CD4-positive, alpha-beta memory T cell (primary cell): ENCODE measurements at regions of chrX and their contacts with region 1.

Region 1: GRCh38 chrX:136147315-136147901 is at the start of gene FHL1:
- DNase-seq: peak; percentile 50 to 62 (median 57)
- H3K4me3 ChIP-seq: peak within 1 kb of the TSS; percentile 52 to 65
- H3K4me3 Mint-ChIP-seq: peak within 1 kb of the TSS; percentile 87 to 93 (median 90)
- H3K27ac ChIP-seq: peak within 1 kb of the TSS; percentile 62
- H3K27ac Mint-ChIP-seq: peak within 1 kb of the TSS; percentile 81 to 96 (median 91)
- H3K4me1 ChIP-seq: peaks cover 33% of the 10 kb centered on the region
- H3K4me1 Mint-ChIP-seq: peaks cover 22 to 61% (median 45%) of the 10 kb centered on the region in 4 donors
- H3K27me3 ChIP-seq: no peaks in the 10 kb centered on the region
- H3K27me3 Mint-ChIP-seq: no peaks in the 10 kb centered on the region
- total RNA-seq, gene FHL1: 32.3 to 32.8 TPM

Region 2: GRCh38 chrX:135973548-135974278 is 173.7 kb before region 1 on chrX and contains the start of gene MMGT1:
- CTCF ChIA-PET with region 1: no interaction called
- POLR2A ChIA-PET with region 1: interaction called, 3 read pairs
- intact Hi-C with region 1: loop called (anchors 5 kb)
- DNase-seq: peak; percentile 80 to 87 (median 85)
- H3K4me3 ChIP-seq: peak within 1 kb of the TSS; percentile 70 to 73
- H3K4me3 Mint-ChIP-seq: peak within 1 kb of the TSS; percentile 87 to 99 (median 96)
- H3K27ac ChIP-seq: peak within 1 kb of the TSS; percentile 92
- H3K27ac Mint-ChIP-seq: peak within 1 kb of the TSS; percentile 98 to 99 (median 99)
- H3K4me1 ChIP-seq: peaks cover 27% of the 10 kb centered on the region
- H3K4me1 Mint-ChIP-seq: peaks cover 18 to 52% (median 33%) of the 10 kb centered on the region in 4 donors
- H3K27me3 ChIP-seq: no peaks in the 10 kb centered on the region
- H3K27me3 Mint-ChIP-seq: no peaks in the 10 kb centered on the region
- total RNA-seq, gene MMGT1: 28.5 to 29.0 TPM

Region 3: DNA sequence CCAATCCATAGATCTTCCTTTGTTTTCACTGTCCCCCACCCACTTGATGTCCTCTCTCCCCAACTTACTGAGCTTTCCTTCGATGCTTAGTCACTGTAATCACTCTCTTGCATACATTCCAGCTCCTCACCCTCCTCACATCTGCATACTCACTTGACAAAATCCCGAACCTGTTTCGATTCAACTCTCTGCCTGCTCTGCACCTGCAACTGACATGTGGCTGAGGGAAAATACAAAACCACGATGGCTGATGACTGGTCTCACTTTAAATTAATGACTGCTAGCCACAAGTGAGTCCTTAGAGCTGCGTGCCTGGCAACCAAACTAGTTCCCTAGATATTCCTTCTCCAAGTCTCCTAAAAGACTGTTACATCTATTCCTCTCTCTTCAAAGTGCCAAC is 70.5 kb before region 1 on chrX:
- CTCF ChIA-PET with region 1: no interaction called
- POLR2A ChIA-PET with region 1: no interaction called
- intact Hi-C with region 1: loop called (anchors 10 kb)
- DNase-seq: no peak
- H3K4me3 ChIP-seq: no peak overlapping the region
- H3K4me3 Mint-ChIP-seq: no peak overlapping the region
- H3K27ac ChIP-seq: no peak overlapping the region
- H3K27ac Mint-ChIP-seq: peak overlapping the region in 1 of 7 donors; percentile 54
- H3K4me1 ChIP-seq: no peaks in the 10 kb centered on the region
- H3K4me1 Mint-ChIP-seq: peaks cover 0 to 5% (median 1%) of the 10 kb centered on the region in 4 donors
- H3K27me3 ChIP-seq: no peaks in the 10 kb centered on the region
- H3K27me3 Mint-ChIP-seq: peaks cover 5 to 9% of the 10 kb centered on the region in 2 donors

Region 4: DNA sequence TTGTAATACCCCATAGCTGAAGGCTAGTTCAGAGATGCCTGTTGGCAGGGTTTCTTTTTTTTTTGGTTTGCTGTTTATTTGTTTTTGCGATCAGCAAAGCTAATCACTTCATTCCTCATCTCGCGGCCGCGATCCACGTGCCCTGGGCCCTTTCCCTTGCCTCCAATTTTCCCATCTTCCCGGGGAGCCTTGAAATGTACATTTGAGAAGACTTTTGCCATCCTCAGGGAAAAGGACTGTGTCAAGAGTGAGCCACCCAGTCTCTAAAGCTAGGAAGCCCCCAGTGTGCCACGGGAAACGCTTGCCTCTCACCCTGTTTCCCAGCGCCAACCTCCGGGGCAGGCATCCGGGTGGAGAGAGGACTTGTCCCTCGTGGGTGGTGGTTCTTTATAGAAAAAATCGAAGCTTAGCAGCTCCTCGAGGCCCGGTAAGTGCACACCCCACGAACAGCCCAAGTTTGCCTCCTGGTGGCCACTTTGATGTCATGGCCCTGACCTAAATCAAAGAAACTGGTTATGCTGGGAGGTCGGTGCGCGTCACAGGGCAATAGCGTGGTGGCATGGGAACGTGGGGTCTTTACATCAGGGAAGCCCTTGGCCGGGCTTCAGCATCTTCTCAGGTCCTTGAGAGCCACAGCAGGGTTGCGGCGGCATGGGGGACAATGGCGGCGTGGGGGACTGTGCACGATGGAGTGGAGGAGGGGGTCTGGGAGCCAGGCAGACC is 61.8 kb after region 1 on chrX:
- CTCF ChIA-PET with region 1: no interaction called
- POLR2A ChIA-PET with region 1: interaction called, 3 read pairs
- intact Hi-C with region 1: loop called (anchors 10 kb)
- DNase-seq: peak; percentile 39 to 50 (median 42)
- H3K4me3 ChIP-seq: no peak overlapping the region
- H3K4me3 Mint-ChIP-seq: no peak overlapping the region
- H3K27ac ChIP-seq: no peak overlapping the region
- H3K27ac Mint-ChIP-seq: peak overlapping the region in 5 of 7 donors; percentile 19 to 72 (median 44)
- H3K4me1 ChIP-seq: peaks cover 25% of the 10 kb centered on the region
- H3K4me1 Mint-ChIP-seq: peaks cover 9 to 25% (median 19%) of the 10 kb centered on the region in 4 donors
- H3K27me3 ChIP-seq: no peaks in the 10 kb centered on the region
- H3K27me3 Mint-ChIP-seq: no peaks in the 10 kb centered on the region

Region 5: DNA sequence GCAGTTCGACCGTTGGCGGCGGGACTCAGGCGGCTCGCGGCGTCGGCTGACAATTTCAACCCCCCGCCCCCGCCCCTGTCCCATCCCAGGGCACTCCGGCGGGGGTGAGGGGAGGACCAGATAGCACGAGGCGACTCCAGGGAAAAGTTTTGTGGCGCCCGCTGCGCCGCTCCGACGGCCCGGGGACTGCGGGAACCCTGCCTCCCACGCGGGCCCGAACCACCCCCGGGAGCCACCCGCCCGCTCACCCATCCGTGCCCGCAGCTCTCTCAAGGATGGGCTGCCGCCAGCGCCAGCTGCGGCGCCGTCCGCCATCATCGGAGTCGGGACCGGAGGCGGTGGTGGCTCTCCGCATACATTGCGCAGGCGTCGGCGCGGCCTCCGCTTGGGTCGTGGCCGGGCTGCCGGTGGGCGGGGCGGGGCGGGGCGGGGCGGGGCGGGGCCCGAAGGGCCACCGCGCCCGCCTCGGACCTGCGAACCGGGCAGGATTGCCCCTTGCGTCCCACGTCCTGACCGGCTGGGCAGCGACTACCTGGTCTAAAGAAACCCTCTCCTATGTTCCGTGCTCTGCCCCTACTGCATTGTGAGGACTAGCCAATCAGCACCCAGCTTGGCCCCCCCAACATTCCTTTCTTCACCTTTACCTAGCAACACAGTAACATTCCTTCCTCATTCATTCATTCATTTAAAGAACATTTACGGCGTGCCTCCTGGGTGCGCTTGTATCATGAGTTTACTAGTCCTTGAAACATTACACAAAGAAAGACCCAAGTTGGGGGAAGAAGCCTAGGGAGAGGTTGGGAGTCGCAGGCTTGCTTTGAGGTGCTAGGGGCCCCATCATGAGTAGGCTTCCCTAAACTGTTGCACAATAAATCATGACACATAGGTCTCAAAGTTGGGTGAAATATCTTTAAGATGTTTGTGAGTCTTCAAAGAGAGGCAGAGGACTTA is 103.9 kb after region 1 on chrX and contains the start of gene MAP7D3:
- CTCF ChIA-PET with region 1: no interaction called
- POLR2A ChIA-PET with region 1: no interaction called
- intact Hi-C with region 1: no loop called
- DNase-seq: peak; percentile 67 to 75 (median 73)
- H3K4me3 ChIP-seq: peak within 1 kb of the TSS; percentile 23 to 60
- H3K4me3 Mint-ChIP-seq: peak within 1 kb of the TSS; percentile 86 to 94 (median 88)
- H3K27ac ChIP-seq: peak within 1 kb of the TSS; percentile 46
- H3K27ac Mint-ChIP-seq: peak within 1 kb of the TSS; percentile 78 to 97 (median 88)
- H3K4me1 ChIP-seq: peaks cover 14% of the 10 kb centered on the region
- H3K4me1 Mint-ChIP-seq: peaks cover 2 to 12% (median 5%) of the 10 kb centered on the region in 4 donors
- H3K27me3 ChIP-seq: no peaks in the 10 kb centered on the region
- H3K27me3 Mint-ChIP-seq: no peaks in the 10 kb centered on the region
- total RNA-seq, gene MAP7D3: 8.5 to 10.1 TPM